ENCODE measurements at regions of chr15 and their contacts with region 1.

Region 1: DNA sequence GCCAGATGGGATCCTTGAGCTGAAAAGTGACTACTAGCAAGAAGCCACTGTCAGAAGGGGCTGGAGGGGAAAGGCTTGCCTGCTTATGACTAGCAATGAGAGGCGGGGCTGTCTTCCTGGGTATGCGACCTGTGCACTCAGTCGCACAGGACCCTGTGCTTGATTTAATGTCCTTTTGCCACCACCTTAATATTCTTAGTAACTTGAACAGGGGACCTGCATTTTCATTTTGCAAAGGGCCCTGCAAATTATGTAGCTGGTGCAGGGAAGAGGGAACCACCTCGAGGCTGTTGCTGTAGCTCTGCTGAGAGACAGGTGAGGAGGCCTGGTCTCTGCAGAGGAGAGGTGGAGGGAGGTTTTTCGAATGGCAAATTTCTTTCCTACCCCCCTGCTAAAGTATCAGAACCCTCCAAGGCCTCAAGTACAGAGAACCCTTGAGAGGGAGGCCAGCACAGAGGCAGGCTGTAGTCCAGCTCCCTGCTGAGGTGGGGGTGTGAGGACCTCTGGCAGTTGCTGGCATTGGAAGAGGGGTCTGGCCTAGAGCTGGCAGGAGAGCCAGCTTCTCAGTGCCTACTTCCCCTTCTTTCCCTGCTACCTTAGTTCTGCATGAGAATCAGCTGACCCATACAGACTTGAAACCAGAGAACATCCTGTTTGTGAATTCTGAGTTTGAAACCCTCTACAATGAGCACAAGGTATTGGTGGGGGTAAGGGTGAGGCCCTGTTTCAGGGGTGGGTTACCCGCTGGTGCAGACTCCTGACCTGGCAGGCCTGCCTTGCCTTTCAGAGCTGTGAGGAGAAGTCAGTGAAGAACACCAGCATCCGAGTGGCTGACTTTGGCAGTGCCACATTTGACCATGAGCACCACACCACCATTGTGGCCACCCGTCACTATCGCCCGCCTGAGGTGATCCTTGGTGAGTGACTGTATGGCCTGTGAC is 11.4 kb downstream of the CLK3 start:
- DNase-seq: peak in 4 of 10 donors; percentile 27 to 65 (median 51)
- ATAC-seq: peak; percentile 79 to 85
- H3K4me3 Mint-ChIP-seq: peak overlapping the region; percentile 47 to 80 (median 68)
- H3K27ac Mint-ChIP-seq: peak overlapping the region; percentile 88 to 96 (median 94)
- H3K4me1 Mint-ChIP-seq: peaks cover 26 to 64% (median 52%) of the 10 kb centered on the region in 4 donors
- H3K27me3 Mint-ChIP-seq: no peaks in the 10 kb centered on the region

Region 2: DNA sequence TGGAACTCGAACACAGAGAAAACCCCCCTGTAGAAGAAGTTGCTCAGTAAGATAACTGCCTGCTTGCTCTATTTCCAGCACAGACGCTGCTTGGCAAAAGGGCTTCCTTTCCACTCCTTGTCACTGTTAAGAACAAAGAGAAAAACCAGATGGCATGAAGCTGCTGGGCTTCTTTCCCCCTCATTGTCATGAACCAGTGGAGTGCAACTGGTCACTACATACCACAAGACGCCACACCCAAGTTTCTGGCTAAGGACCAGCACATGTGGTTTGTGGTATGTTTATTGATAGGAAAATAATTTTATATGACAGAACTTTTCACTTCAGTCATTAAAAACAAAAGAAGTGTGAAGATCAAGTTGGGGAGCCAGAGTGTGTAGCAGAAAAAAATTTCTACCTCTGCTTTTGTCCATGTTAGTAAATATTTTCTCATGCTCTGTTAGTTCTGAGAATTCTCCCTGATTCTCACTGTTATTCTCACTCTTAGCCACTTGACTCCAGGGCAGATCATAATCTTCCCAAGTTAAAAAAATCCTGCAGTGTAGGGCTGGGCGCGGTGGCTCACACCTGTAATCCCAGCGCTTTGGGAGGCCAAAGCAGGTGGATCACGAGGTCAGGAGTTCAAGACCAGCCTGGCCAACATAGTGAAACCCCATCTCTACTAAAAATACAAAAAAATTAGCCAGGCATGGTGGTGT is 26.6 kb after region 1 on chr15:
- POLR2A ChIA-PET with region 1: no interaction called
- DNase-seq: no peak
- ATAC-seq: no peak
- H3K4me3 Mint-ChIP-seq: no peak overlapping the region
- H3K27ac Mint-ChIP-seq: peak overlapping the region in 3 of 10 donors; percentile 57 to 63 (median 61)
- H3K4me1 Mint-ChIP-seq: peaks cover 17 to 50% (median 30%) of the 10 kb centered on the region in 4 donors
- H3K27me3 Mint-ChIP-seq: no peaks in the 10 kb centered on the region

Region 3: GRCh38 chr15:74776821-74777768 is 150.1 kb after region 1 on chr15:
- POLR2A ChIA-PET with region 1: interaction called, 13 read pairs
- DNase-seq: peak in 9 of 10 donors; percentile 45 to 70 (median 61)
- ATAC-seq: peak; percentile 47 to 67
- H3K4me3 Mint-ChIP-seq: peak overlapping the region; percentile 77 to 98 (median 90)
- H3K27ac Mint-ChIP-seq: peak overlapping the region; percentile 93 to 100 (median 98)
- H3K4me1 Mint-ChIP-seq: peaks cover 48 to 87% (median 79%) of the 10 kb centered on the region in 4 donors
- H3K27me3 Mint-ChIP-seq: peaks cover 0 to 2% (median 0%) of the 10 kb centered on the region in 5 donors